Naive thymus-derived CD4-positive, alpha-beta T cell (primary cell): ENCODE measurements at regions of chr15 and their contacts with region 1.

Region 1: DNA sequence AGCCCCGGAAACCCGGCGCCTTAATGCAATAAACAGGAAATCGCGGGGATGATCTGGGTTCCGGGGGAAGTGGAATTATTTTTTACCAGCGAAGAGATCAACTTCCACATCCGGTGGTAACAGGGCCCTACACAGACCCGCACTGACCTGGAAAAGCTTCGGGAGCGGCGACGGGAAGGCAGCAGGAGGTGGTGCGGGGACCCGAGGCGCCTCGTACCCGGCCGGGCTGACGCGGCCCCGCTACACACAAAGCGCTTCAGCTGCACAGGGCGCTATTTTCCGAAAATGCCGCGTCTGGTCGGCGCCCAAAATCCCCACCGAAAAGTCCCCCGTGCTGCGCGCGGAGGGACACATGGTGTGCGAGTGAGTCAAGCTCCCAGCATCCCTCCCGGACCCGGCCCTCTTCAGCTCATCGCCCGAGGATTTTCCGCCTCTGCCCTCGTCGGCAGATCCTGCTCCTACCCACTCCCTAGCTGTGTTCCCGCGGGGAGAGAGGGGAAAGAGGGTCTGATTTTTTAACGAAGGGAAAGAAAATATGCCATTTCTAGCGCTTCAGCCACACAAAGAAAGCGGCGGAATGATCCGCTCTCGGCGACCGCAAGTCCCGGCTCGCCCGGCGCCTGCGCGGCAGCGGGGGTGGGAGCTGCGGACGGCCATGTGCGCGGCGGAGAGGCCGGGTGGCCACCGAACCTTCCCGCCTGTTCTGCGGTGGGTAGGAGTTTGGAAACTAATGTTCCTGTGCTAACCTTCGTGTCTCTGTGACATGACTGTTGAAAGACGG is at the start of gene GABPB1:
- DNase-seq: peak; percentile 85 to 93 (median 91)
- ATAC-seq: peak; percentile 69
- H3K4me3 ChIP-seq: peak within 1 kb of the TSS; percentile 83
- H3K4me3 Mint-ChIP-seq: peak within 1 kb of the TSS; percentile 83 to 99 (median 98)
- H3K27ac ChIP-seq: peak within 1 kb of the TSS; percentile 97
- H3K27ac Mint-ChIP-seq: peak within 1 kb of the TSS; percentile 98 to 100 (median 99)
- H3K4me1 ChIP-seq: peaks cover 38 to 47% of the 10 kb centered on the region in 2 donors
- H3K4me1 Mint-ChIP-seq: peaks cover 38 to 71% (median 55%) of the 10 kb centered on the region in 7 donors
- H3K27me3 ChIP-seq: no peaks in the 10 kb centered on the region
- H3K27me3 Mint-ChIP-seq: peaks cover 0 to 12% (median 0%) of the 10 kb centered on the region in 5 donors
- total RNA-seq, gene GABPB1: 14.7 to 42.7 (median 16.8) TPM

Region 2: GRCh38 chr15:49046220-49047102 is 1308.6 kb before region 1 on chr15 and contains the start of gene SECISBP2L:
- CTCF ChIA-PET with region 1: no interaction called
- POLR2A ChIA-PET with region 1: interaction called, 3 read pairs
- intact Hi-C with region 1: loop called in 1 of 2 experiments (anchors 1 kb)
- DNase-seq: peak; percentile 73 to 92 (median 91)
- ATAC-seq: peak; percentile 98
- H3K4me3 ChIP-seq: peak within 1 kb of the TSS; percentile 86
- H3K4me3 Mint-ChIP-seq: peak within 1 kb of the TSS; percentile 96 to 99 (median 98)
- H3K27ac ChIP-seq: peak within 1 kb of the TSS; percentile 82
- H3K27ac Mint-ChIP-seq: peak within 1 kb of the TSS; percentile 91 to 97 (median 93)
- H3K4me1 ChIP-seq: peaks cover 16 to 18% of the 10 kb centered on the region in 2 donors
- H3K4me1 Mint-ChIP-seq: peaks cover 23 to 41% (median 34%) of the 10 kb centered on the region in 7 donors
- H3K27me3 ChIP-seq: no peaks in the 10 kb centered on the region
- H3K27me3 Mint-ChIP-seq: no peaks in the 10 kb centered on the region
- total RNA-seq, gene SECISBP2L: 39.3 to 75.8 (median 55.8) TPM

Region 3: GRCh38 chr15:50107591-50108408 is 247.2 kb before region 1 on chr15:
- CTCF ChIA-PET with region 1: no interaction called
- POLR2A ChIA-PET with region 1: no interaction called
- intact Hi-C with region 1: loop called in 1 of 2 experiments (anchors 1 kb)
- DNase-seq: peak in 1 of 9 donors; percentile 42
- ATAC-seq: peak; percentile 90
- H3K4me3 ChIP-seq: no peak overlapping the region
- H3K4me3 Mint-ChIP-seq: peak overlapping the region in 2 of 10 donors; percentile 33 to 80
- H3K27ac ChIP-seq: no peak overlapping the region
- H3K27ac Mint-ChIP-seq: peak overlapping the region in 2 of 9 donors; percentile 15 to 96
- H3K4me1 ChIP-seq: peaks cover 4 to 19% of the 10 kb centered on the region in 2 donors
- H3K4me1 Mint-ChIP-seq: peaks cover 21 to 73% (median 35%) of the 10 kb centered on the region in 7 donors
- H3K27me3 ChIP-seq: no peaks in the 10 kb centered on the region
- H3K27me3 Mint-ChIP-seq: peaks cover 0 to 22% (median 0%) of the 10 kb centered on the region in 5 donors

Region 4: GRCh38 chr15:50315814-50316630 is 39.0 kb before region 1 on chr15:
- CTCF ChIA-PET with region 1: no interaction called
- POLR2A ChIA-PET with region 1: interaction called, 14 read pairs
- intact Hi-C with region 1: loop called (anchors 2 kb)
- DNase-seq: peak in 7 of 9 donors; percentile 8 to 47 (median 30)
- ATAC-seq: peak; percentile 66
- H3K4me3 ChIP-seq: no peak overlapping the region
- H3K4me3 Mint-ChIP-seq: no peak overlapping the region
- H3K27ac ChIP-seq: no peak overlapping the region
- H3K27ac Mint-ChIP-seq: no peak overlapping the region
- H3K4me1 ChIP-seq: peaks cover 0 to 6% of the 10 kb centered on the region in 2 donors
- H3K4me1 Mint-ChIP-seq: peaks cover 12 to 34% (median 21%) of the 10 kb centered on the region in 7 donors
- H3K27me3 ChIP-seq: no peaks in the 10 kb centered on the region
- H3K27me3 Mint-ChIP-seq: no peaks in the 10 kb centered on the region

Region 5: GRCh38 chr15:50562735-50563640 is 208.0 kb after region 1 on chr15:
- CTCF ChIA-PET with region 1: no interaction called
- POLR2A ChIA-PET with region 1: no interaction called
- intact Hi-C with region 1: loop called in 1 of 2 experiments (anchors 10 kb)
- DNase-seq: no peak
- ATAC-seq: no peak
- H3K4me3 ChIP-seq: no peak overlapping the region
- H3K4me3 Mint-ChIP-seq: peak overlapping the region in 1 of 10 donors; percentile 15
- H3K27ac ChIP-seq: no peak overlapping the region
- H3K27ac Mint-ChIP-seq: peak overlapping the region in 8 of 9 donors; percentile 6 to 76 (median 36)
- H3K4me1 ChIP-seq: no peaks in the 10 kb centered on the region
- H3K4me1 Mint-ChIP-seq: peaks cover 0 to 17% (median 4%) of the 10 kb centered on the region in 7 donors
- H3K27me3 ChIP-seq: no peaks in the 10 kb centered on the region
- H3K27me3 Mint-ChIP-seq: no peaks in the 10 kb centered on the region

Region 6: GRCh38 chr15:50828610-50829219 is 473.7 kb after region 1 on chr15:
- CTCF ChIA-PET with region 1: no interaction called
- POLR2A ChIA-PET with region 1: no interaction called
- intact Hi-C with region 1: no loop called
- DNase-seq: no peak
- ATAC-seq: no peak
- H3K4me3 ChIP-seq: no peak overlapping the region
- H3K4me3 Mint-ChIP-seq: no peak overlapping the region
- H3K27ac ChIP-seq: no peak overlapping the region
- H3K27ac Mint-ChIP-seq: no peak overlapping the region
- H3K4me1 ChIP-seq: no peaks in the 10 kb centered on the region
- H3K4me1 Mint-ChIP-seq: no peaks in the 10 kb centered on the region
- H3K27me3 ChIP-seq: no peaks in the 10 kb centered on the region
- H3K27me3 Mint-ChIP-seq: peaks cover 0 to 15% (median 5%) of the 10 kb centered on the region in 5 donors

Region 7: DNA sequence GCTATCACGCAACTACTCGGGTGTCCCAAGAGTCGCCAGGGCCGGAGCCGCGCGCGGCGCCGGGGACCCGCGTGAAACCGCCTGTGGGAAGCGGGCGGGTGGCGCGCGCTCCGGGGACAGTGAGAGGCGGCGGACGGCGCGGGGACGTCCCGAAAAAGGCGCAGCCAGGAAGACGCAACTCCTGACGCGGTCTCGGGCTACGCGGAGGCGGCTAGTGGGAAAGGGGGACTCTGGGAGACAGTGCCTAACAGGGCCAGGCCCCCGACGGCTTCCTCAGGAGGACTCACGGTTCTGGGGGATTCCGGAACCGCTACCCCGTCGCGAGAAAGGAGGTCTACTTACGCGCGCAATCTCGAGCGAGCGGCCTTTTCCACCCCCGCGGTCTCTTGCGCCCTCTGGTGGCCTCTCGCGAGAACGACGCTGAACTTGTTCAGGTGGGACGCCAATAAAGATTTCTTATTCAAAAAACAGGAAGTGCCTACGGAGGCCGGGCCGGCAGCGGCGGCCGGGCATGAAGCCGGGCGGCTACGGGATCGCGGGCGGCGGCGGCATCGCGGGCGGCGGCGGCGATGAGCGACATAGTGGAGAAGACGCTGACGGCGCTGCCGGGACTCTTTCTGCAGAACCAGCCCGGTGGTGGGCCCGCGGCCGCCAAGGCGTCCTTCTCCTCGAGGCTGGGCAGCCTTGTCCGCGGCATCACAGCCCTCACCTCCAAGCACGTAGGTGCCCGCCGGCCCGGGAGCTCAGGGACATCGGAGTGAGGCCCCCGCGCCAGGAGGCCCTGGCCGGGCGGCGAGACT is 553.4 kb after region 1 on chr15 and contains the start of gene AP4E1:
- CTCF ChIA-PET with region 1: no interaction called
- POLR2A ChIA-PET with region 1: interaction called, 9 read pairs
- intact Hi-C with region 1: loop called (anchors 1 kb)
- DNase-seq: peak; percentile 91 to 96 (median 95)
- ATAC-seq: peak; percentile 81
- H3K4me3 ChIP-seq: peak within 1 kb of the TSS; percentile 74
- H3K4me3 Mint-ChIP-seq: peak within 1 kb of the TSS; percentile 89 to 99 (median 96)
- H3K27ac ChIP-seq: peak within 1 kb of the TSS; percentile 99
- H3K27ac Mint-ChIP-seq: peak within 1 kb of the TSS; percentile 93 to 99 (median 98)
- H3K4me1 ChIP-seq: peaks cover 4% of the 10 kb centered on the region in 2 donors
- H3K4me1 Mint-ChIP-seq: peaks cover 11 to 35% (median 30%) of the 10 kb centered on the region in 7 donors
- H3K27me3 ChIP-seq: no peaks in the 10 kb centered on the region
- H3K27me3 Mint-ChIP-seq: no peaks in the 10 kb centered on the region
- total RNA-seq, gene AP4E1: 9.9 to 13.8 (median 12.5) TPM

Region 8: DNA sequence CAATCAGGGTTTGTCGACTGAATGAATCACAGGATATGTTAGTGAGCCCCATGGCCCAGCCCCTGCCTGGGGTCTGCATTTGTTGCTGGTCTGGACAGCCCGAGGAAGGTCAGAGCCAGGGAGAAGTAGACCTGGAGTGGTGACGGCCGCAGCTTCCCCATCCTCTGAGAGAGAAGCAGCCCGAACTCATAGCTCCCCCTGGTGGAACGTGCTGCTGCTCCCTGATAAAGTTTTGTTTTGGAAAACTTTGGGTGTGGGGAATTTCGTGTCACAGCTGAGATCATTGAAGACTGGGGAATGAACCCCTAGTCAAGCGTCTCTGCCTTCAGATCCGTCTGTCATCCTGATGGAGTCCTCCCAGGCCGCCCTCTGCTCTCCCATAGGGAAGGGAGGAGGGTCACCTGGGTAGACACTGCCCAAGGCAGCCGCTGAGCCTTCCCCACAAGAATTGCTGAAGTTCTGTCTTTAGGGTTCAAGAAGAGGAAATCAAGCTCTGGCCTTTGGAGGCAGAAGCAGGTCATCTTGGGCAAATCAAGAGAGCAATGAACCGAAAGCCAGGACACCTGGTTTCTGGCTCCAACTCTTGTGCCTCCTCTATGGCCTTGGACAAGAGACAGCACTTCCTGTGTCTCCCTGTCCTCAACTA is 1047.0 kb after region 1 on chr15:
- CTCF ChIA-PET with region 1: no interaction called
- POLR2A ChIA-PET with region 1: no interaction called
- intact Hi-C with region 1: no loop called
- DNase-seq: no peak
- ATAC-seq: peak; percentile 57
- H3K4me3 ChIP-seq: no peak overlapping the region
- H3K4me3 Mint-ChIP-seq: no peak overlapping the region
- H3K27ac ChIP-seq: no peak overlapping the region
- H3K27ac Mint-ChIP-seq: no peak overlapping the region
- H3K4me1 ChIP-seq: no peaks in the 10 kb centered on the region
- H3K4me1 Mint-ChIP-seq: no peaks in the 10 kb centered on the region
- H3K27me3 ChIP-seq: no peaks in the 10 kb centered on the region
- H3K27me3 Mint-ChIP-seq: peaks cover 8 to 35% (median 26%) of the 10 kb centered on the region in 5 donors